ENCODE measurements at regions of chr14 and their contacts with region 1.

Region 1: DNA sequence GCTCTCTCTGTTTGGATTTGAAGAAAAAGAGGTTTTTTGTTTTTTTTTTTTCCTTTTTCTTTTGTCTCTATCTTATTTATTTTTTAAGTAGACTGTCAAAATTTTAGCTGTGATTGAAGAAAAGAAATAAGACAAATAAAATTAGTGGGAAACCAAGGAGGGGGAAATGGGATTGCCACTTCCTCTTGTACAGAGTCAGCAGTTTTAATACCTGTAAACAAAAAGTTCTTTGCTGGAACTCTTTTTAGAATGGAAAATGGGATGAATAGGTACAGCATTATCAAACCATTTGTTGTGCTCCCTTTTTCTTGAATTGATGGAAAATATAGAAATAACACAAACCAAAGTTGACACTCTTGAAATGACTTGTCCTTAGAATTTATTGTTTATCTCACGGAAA is 680.7 kb downstream of the DIO2 start:
- DNase-seq: no peak
- H3K4me3 ChIP-seq: no peak overlapping the region
- H3K27ac ChIP-seq: no peak overlapping the region
- H3K4me1 ChIP-seq: no peaks in the 10 kb centered on the region
- H3K27me3 ChIP-seq: no peaks in the 10 kb centered on the region
- CTCF ChIP-seq: no peak
- POLR2A ChIP-seq: no peak

Region 2: GRCh38 chr14:79516009-79516408 is 14.5 kb before region 1 on chr14:
- intact Hi-C with region 1: loop called (anchors 1 kb)
- DNase-seq: no peak
- H3K4me3 ChIP-seq: no peak overlapping the region
- H3K27ac ChIP-seq: no peak overlapping the region
- H3K4me1 ChIP-seq: no peaks in the 10 kb centered on the region
- H3K27me3 ChIP-seq: no peaks in the 10 kb centered on the region
- CTCF ChIP-seq: no peak
- POLR2A ChIP-seq: no peak

Measured in breast epithelium (tissue), 4 donors.